ENCODE measurements at regions of chr7 and their contacts with region 1.

Region 1: GRCh38 chr7:55255496-55256435 is 109.4 kb upstream of the LANCL2 start:
- DNase-seq: peak; percentile 68 to 89 (median 78)
- H3K4me3 ChIP-seq: peak overlapping the region; percentile 45 to 93 (median 70)
- H3K27ac ChIP-seq: peak overlapping the region in 17 of 59 donors; percentile 6 to 83 (median 52)
- H3K27me3 ChIP-seq: peaks cover 0 to 29% (median 0%) of the 10 kb centered on the region in 45 donors
- CTCF ChIP-seq: peak; percentile 37 to 96 (median 83)

Region 2: GRCh38 chr7:54773472-54774399 is 482.0 kb before region 1 on chr7:
- intact Hi-C with region 1: loop called (anchors 1 kb)
- DNase-seq: peak; percentile 66 to 83 (median 80)
- H3K4me3 ChIP-seq: peak overlapping the region; percentile 18 to 64 (median 48)
- H3K27ac ChIP-seq: peak overlapping the region in 2 of 59 donors; percentile 6 to 63
- H3K27me3 ChIP-seq: peaks cover 0 to 9% (median 0%) of the 10 kb centered on the region in 45 donors
- CTCF ChIP-seq: peak; percentile 35 to 95 (median 82)

Region 3: GRCh38 chr7:54932818-54933543 is 322.8 kb before region 1 on chr7:
- intact Hi-C with region 1: loop called in 1 of 2 experiments (anchors 10 kb)
- DNase-seq: peak; percentile 15 to 87 (median 72)
- H3K4me3 ChIP-seq: peak overlapping the region; percentile 32 to 74 (median 55)
- H3K27ac ChIP-seq: peak overlapping the region in 49 of 59 donors; percentile 2 to 82 (median 45)
- H3K27me3 ChIP-seq: peaks cover 0 to 7% (median 0%) of the 10 kb centered on the region in 45 donors
- CTCF ChIP-seq: peak in 14 of 56 donors; percentile 8 to 32 (median 18)

Region 4: DNA sequence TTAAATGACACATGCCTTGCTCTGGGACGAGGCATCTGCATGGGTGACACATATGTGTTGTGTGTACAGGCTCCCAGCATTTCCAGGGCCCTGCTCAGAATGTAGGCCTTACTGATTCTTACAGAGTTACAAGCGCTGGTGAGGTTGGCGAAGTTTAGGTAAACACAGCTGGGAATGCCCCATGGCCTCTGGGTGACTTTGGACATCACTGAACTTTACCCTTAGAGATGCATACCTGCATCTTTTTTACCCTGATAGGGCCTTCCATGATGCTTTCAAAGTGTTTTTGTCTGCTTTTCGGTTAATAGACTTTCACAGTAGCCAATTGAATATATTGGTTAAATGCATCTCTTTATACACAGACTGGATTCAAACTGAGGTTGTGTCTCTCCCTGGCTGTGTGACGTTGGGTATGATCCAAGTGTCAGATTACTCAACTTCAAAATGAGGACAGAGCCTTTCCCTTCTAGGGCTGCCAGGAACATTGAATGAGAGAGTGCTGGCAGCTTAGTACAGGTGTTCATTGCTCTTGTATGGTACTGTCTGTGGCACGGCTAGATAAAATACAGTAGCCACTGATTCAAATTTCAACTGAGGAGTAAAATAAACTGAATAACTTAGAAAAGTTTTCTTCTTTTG is 207.4 kb before region 1 on chr7:
- intact Hi-C with region 1: loop called (anchors 5 to 10 kb)
- DNase-seq: no peak
- H3K4me3 ChIP-seq: no peak overlapping the region
- H3K27ac ChIP-seq: peak overlapping the region in 1 of 59 donors; percentile 23
- H3K27me3 ChIP-seq: peaks cover 0 to 4% (median 0%) of the 10 kb centered on the region in 45 donors
- CTCF ChIP-seq: no peak

Region 5: GRCh38 chr7:55053651-55054571 is 201.9 kb before region 1 on chr7:
- intact Hi-C with region 1: loop called (anchors 5 to 10 kb)
- DNase-seq: no peak
- H3K4me3 ChIP-seq: no peak overlapping the region
- H3K27ac ChIP-seq: peak overlapping the region in 1 of 59 donors; percentile 20
- H3K27me3 ChIP-seq: peaks cover 0 to 7% (median 0%) of the 10 kb centered on the region in 45 donors
- CTCF ChIP-seq: peak in 2 of 56 donors; percentile 16 to 23

Region 6: DNA sequence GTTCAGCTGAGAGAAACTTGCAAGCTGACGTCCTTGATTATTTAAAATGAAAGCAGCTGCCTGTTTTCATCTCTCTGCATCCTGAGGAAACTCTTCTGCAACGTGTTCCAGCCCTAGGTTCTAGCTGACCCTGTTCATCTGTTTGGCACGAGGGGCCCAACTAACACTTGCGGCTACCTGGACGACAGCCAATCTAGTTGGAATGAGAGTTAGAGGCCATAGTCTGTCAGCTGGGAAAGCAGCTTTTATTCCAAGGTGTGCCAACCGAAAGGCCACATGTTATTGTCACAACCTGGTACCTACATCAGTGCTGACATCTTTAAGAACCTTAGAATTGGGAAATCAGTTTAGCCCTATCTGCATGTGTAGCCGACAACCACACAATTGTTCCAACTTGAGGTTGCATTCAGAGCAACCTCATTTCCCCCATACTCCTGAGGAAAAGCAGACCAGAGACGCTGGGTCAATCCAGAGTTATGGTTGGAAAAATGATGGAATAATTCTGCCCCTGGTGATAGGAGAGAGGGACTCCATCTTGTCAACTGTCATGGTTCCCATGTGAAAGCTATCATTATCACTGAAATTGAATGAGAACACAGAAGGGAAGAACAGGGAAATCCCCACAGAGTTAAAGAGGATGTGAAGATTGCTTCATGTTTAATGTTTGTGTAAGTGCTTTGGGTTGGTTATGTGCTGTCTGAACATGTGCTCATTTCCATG is 115.4 kb before region 1 on chr7:
- intact Hi-C with region 1: loop called in 1 of 2 experiments (anchors 10 kb)
- DNase-seq: no peak
- H3K4me3 ChIP-seq: no peak overlapping the region
- H3K27ac ChIP-seq: no peak overlapping the region
- H3K27me3 ChIP-seq: peaks cover 0 to 6% (median 0%) of the 10 kb centered on the region in 45 donors
- CTCF ChIP-seq: no peak

Region 7: DNA sequence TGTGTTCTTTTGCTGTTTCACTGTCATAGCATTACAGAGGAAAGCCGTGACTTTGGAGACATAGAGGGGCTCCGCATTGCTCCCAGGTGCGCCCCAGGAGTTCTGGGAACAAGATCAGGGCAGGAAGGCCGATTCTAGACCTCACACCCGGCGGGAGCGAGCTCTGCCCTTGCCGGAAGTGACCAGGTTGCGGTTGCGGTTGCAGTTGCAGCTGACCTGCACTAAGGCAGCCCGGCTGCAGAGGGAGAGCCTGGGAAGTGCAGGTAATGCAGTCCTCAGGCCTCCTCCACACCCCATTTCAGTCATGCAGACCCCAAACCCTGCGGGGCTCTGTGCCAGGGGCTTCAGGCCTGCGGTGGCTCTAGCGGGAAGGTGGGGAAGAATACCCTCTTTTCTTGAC is 20.7 kb before region 1 on chr7:
- intact Hi-C with region 1: no loop called
- DNase-seq: no peak
- H3K4me3 ChIP-seq: no peak overlapping the region
- H3K27ac ChIP-seq: no peak overlapping the region
- H3K27me3 ChIP-seq: peaks cover 0 to 9% (median 0%) of the 10 kb centered on the region in 45 donors
- CTCF ChIP-seq: no peak

Region 8: DNA sequence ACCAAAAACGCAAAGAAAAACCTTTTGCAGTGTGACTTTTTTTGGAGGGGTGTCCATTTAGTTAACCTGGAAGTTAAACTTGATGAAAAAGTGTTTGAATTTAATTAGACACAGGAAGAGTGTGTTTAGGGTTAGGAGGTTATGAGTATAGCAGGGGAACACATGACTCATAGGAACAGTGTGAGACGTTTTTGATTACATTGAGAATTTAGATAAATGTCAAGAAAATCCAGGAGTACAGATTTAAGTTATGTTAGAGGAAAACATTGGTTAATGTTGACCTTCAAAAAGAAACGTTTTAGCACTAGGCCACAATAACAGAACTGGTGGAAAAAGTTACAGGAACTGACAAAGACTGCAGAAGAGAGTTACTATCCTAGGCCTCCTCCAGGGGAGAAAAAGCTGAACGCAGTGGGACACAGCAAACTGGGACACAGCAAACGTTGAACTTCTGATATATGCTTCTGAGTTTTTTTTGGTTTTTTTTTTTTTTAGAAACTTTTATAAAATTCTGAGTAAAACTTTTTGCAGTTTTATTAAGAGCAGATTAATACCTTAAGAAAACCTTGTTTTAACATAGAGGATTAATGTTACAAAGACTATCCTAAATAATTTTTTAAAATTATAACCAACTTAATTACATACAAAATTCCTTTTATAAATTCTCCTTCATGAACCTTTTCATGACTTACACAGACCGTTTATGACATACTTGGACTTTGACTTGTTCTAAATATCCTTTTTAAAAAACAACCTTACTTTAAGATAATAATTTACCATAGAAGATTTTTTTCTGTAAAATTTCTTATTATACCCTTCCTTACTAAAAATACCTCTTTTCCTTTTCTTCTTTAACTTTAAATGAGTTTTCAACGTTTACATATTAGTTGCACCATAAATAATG is 131.5 kb after region 1 on chr7:
- intact Hi-C with region 1: no loop called
- DNase-seq: no peak
- H3K4me3 ChIP-seq: no peak overlapping the region
- H3K27ac ChIP-seq: no peak overlapping the region
- H3K27me3 ChIP-seq: no peaks in the 10 kb centered on the region
- CTCF ChIP-seq: no peak

Measured in dorsolateral prefrontal cortex (tissue), 120 donors.